Vagina (tissue), 2 donors: ENCODE measurements at regions of chr20 and their contacts with region 1.

Region 1: DNA sequence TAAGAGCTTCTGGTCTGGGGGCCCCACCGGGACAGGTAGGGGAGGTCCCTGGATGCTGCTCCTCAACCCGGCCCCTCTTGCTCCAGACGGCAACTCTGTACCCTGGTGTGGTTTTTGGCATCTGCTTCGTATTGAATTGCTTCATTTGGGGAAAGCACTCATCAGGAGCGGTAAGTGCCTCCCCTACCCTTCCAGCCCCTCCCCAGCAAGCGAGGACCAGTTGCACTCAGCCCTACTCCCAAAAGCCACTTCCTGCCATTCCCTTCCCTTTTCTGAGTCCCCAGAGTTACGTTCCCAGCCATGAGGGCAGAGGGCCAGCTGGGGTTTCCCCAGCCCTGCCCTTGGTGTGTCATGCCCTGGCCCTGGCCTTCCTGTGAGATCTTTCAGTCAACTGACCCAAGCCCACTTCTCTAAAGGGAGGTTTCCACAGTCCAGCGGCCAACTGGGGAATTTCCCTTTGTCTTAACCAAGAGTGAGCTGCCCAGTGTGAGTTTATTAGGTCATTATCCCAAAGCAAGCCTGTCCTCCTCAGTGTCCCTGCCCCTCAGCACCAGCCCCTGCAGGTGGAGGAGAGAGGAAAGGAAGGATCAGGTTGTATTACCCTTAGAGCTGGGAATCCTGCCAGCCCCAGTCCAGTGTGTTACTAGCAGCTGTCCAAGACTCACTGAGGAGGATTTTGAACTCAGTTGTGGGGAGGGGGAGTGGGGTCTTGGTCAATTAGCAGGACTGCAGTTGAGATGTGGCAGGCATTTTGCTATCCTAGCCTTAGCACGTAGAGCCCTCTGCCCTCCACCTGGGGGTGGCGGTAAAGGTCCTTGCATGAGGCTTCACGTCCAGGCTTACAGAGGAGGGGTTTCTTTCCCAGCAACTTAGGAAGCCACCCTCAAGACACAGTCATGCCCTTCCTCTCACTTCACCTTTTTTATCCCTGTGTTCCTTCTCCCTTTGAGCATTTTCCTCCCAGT is 45.8 kb downstream of the TM9SF4 start:
- DNase-seq: peak in 1 of 2 donors; percentile 92
- H3K4me3 ChIP-seq: no peak overlapping the region
- H3K27ac ChIP-seq: no peak overlapping the region
- H3K4me1 ChIP-seq: peaks cover 12% of the 10 kb centered on the region
- H3K27me3 ChIP-seq: no peaks in the 10 kb centered on the region
- CTCF ChIP-seq: no peak
- POLR2A ChIP-seq: no peak

Region 2: DNA sequence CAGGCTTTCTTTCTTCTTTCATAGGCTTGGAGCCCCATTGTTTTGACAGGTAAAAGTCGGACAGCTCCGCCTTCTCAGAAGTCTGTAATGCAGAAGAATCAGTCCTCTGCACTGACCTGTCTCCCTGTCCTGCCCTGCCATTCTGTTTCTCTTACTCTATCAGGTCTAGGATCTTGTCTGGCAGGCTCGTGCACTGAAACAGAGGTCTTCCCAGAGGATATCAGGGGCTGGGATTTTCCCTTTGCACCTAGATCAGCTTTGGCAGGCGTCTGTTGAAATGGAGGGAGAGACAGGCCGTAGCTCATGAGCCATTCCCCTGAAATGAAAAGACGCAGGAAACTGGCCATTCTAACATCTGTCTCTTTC is 147.2 kb after region 1 on chr20:
- intact Hi-C with region 1: no loop called
- DNase-seq: no peak
- H3K4me3 ChIP-seq: no peak overlapping the region
- H3K27ac ChIP-seq: no peak overlapping the region
- H3K4me1 ChIP-seq: peaks cover 13% of the 10 kb centered on the region
- H3K27me3 ChIP-seq: no peaks in the 10 kb centered on the region
- CTCF ChIP-seq: no peak
- POLR2A ChIP-seq: no peak

Region 3: GRCh38 chr20:33192912-33193501 is 1037.7 kb after region 1 on chr20:
- intact Hi-C with region 1: loop called (anchors 10 kb)
- DNase-seq: no peak
- H3K4me3 ChIP-seq: no peak overlapping the region
- H3K27ac ChIP-seq: no peak overlapping the region
- H3K4me1 ChIP-seq: no peaks in the 10 kb centered on the region
- H3K27me3 ChIP-seq: no peaks in the 10 kb centered on the region
- CTCF ChIP-seq: no peak
- POLR2A ChIP-seq: no peak